ENCODE measurements at regions of chr18 and their contacts with region 1.

Region 1: DNA sequence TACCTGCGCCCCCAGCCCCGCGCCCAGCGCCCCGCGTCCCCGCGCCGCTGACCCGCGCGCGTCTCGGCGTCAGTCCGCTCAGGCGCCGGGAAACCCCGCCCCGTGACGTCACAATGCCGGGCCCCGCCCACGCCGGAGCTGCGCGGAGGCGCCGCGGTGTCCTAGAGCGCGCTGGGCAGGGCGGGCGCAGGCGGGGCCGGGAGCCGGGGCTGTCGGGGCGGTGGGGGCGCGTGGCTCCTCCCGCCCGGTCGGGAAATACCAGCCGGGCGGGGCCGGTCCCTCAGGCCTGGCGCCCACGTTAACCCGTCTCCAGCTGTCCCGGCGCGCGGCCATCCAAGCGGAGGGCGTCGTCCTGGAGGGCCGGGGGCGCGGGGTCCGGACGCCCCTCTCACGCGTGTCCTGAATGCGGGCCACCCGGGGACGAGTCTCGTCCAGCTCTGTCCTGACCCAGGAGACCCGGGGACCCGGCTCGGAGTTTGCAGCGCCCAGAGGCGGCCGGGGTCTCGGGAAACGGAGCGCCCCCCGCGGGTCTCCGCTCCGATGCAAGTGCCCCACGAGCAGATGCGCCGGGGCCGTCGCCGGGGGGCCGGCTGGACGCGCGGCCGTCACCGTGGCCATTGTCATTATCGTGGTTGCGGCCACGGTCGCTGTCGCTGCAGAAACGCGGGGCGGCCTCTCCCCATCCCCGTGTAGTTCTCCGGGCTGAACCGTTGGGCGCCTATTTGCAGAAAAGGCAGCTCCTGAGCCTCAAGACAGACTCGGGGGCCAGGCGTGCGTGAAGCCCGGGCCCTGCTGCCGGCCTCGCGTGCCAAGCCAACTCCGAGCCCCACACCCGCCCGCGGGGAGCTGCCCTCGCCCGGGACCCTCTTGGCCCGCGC is at the start of gene SLC66A2:
- DNase-seq: peak; percentile 93 to 98 (median 94)
- ATAC-seq: peak; percentile 84 to 94 (median 92)
- H3K4me3 ChIP-seq: peak within 1 kb of the TSS; percentile 82 to 98 (median 90)
- H3K27ac ChIP-seq: peak within 1 kb of the TSS; percentile 73 to 94 (median 86)
- H3K4me1 ChIP-seq: peaks cover 0 to 51% (median 35%) of the 10 kb centered on the region in 12 donors
- H3K27me3 ChIP-seq: no peaks in the 10 kb centered on the region
- CTCF ChIP-seq: peak in 2 of 12 donors; percentile 4 to 27
- POLR2A ChIP-seq: peak; percentile 31 to 74
- total RNA-seq, gene SLC66A2: 19.7 to 33.4 (median 26.6) TPM

Region 2: DNA sequence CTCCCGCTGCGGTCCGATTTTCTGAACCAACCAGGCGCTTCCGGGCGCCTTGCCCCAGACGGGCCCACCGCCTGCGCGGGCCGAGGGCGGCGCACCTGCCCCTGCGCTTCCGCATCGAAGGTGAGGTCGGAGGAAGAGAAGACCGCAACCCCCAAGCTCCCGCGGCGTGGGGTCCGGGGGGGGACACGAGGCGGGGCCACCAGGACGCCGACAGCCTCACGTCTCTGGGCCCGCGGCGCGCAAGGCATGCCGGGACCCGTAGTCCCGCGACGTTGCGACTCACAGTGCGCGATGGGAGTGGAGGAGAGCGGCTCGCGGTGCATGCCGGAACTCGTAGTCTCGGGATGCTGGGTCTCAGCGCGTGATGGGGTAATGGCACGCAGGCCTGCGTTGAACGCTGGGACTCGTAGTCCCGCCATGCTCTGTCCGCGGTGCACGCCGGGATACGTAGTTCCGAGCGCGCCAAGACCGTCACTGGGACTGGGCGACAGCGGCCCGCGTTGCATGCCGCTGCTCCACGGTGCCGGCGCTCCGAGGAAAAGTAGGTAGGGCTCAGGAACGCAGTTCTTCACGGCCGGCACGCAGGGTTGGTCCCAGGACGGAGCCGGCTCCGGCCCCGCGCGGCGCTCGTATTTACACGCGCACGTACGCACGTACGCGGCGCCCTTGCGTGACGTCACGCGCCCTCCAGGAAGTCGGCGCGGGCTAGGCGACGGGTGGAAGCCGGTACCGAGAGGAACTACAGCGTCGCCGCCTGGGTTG is 272.5 kb before region 1 on chr18 and contains the start of gene CTDP1:
- intact Hi-C with region 1: loop called in 2 of 10 experiments (anchors 10 kb)
- DNase-seq: peak; percentile 99 to 100 (median 99)
- ATAC-seq: peak; percentile 98 to 99 (median 98)
- H3K4me3 ChIP-seq: peak within 1 kb of the TSS; percentile 61 to 99 (median 88)
- H3K27ac ChIP-seq: peak within 1 kb of the TSS; percentile 94 to 100 (median 99)
- H3K4me1 ChIP-seq: peaks cover 6 to 60% (median 32%) of the 10 kb centered on the region in 12 donors
- H3K27me3 ChIP-seq: no peaks in the 10 kb centered on the region
- CTCF ChIP-seq: no peak
- POLR2A ChIP-seq: peak in 1 of 2 donors; percentile 54
- total RNA-seq, gene CTDP1: 6.0 to 17.1 (median 10.3) TPM

Region 3: GRCh38 chr18:79988451-79989194 is 36.8 kb after region 1 on chr18 and contains the start of gene TXNL4A:
- intact Hi-C with region 1: loop called in 4 of 10 experiments (anchors 2 to 5 kb)
- DNase-seq: peak; percentile 86 to 93 (median 90)
- ATAC-seq: peak; percentile 97 to 99 (median 98)
- H3K4me3 ChIP-seq: peak within 1 kb of the TSS; percentile 67 to 99 (median 92)
- H3K27ac ChIP-seq: peak within 1 kb of the TSS; percentile 84 to 99 (median 96)
- H3K4me1 ChIP-seq: peaks cover 0 to 40% (median 19%) of the 10 kb centered on the region in 12 donors
- H3K27me3 ChIP-seq: no peaks in the 10 kb centered on the region
- CTCF ChIP-seq: no peak
- POLR2A ChIP-seq: peak; percentile 58 to 94
- total RNA-seq, gene TXNL4A: 35.2 to 113 (median 90.9) TPM

Region 4: GRCh38 chr18:80108728-80109675 is 157.2 kb after region 1 on chr18 and contains the start of gene ADNP2:
- intact Hi-C with region 1: loop called in 1 of 10 experiments (anchors 10 kb)
- DNase-seq: peak; percentile 77 to 90 (median 87)
- ATAC-seq: peak; percentile 90 to 95 (median 94)
- H3K4me3 ChIP-seq: peak within 1 kb of the TSS; percentile 52 to 98 (median 72)
- H3K27ac ChIP-seq: peak within 1 kb of the TSS; percentile 77 to 95 (median 86)
- H3K4me1 ChIP-seq: peaks cover 0 to 35% (median 26%) of the 10 kb centered on the region in 12 donors
- H3K27me3 ChIP-seq: no peaks in the 10 kb centered on the region
- CTCF ChIP-seq: no peak
- POLR2A ChIP-seq: no peak
- total RNA-seq, gene ADNP2: 6.7 to 13.1 (median 8.8) TPM

Region 5: GRCh38 chr18:80157708-80158343 is 206.0 kb after region 1 on chr18:
- intact Hi-C with region 1: loop called in 1 of 10 experiments (anchors 10 kb)
- DNase-seq: peak; percentile 60 to 79 (median 70)
- ATAC-seq: peak in 2 of 4 donors; percentile 63 to 64
- H3K4me3 ChIP-seq: no peak overlapping the region
- H3K27ac ChIP-seq: no peak overlapping the region
- H3K4me1 ChIP-seq: peaks cover 0 to 10% (median 0%) of the 10 kb centered on the region in 12 donors
- H3K27me3 ChIP-seq: peaks cover 0 to 6% (median 0%) of the 10 kb centered on the region in 9 donors
- CTCF ChIP-seq: peak in 11 of 12 donors; percentile 90 to 98 (median 97)
- POLR2A ChIP-seq: no peak

Measured in heart left ventricle (tissue), 16 donors.